B cell (primary cell): ENCODE measurements at regions of chr12 and their contacts with region 1.

Region 1: GRCh38 chr12:7068240-7068993 is 7.9 kb downstream of the C1S start:
- DNase-seq: no peak
- ATAC-seq: no peak
- H3K4me3 ChIP-seq: no peak overlapping the region
- H3K4me3 Mint-ChIP-seq: no peak overlapping the region
- H3K27ac ChIP-seq: no peak overlapping the region
- H3K27ac Mint-ChIP-seq: no peak overlapping the region
- H3K4me1 ChIP-seq: no peaks in the 10 kb centered on the region
- H3K4me1 Mint-ChIP-seq: no peaks in the 10 kb centered on the region
- H3K27me3 ChIP-seq: no peaks in the 10 kb centered on the region
- H3K27me3 Mint-ChIP-seq: peaks cover 30% of the 10 kb centered on the region
- CTCF ChIP-seq: no peak

Region 2: GRCh38 chr12:6592087-6592486 is 476.3 kb before region 1 on chr12:
- CTCF ChIA-PET with region 1: no interaction called
- POLR2A ChIA-PET with region 1: interaction called, 10 read pairs
- intact Hi-C with region 1: no loop called
- DNase-seq: no peak
- ATAC-seq: no peak
- H3K4me3 ChIP-seq: no peak overlapping the region
- H3K4me3 Mint-ChIP-seq: no peak overlapping the region
- H3K27ac ChIP-seq: no peak overlapping the region
- H3K27ac Mint-ChIP-seq: no peak overlapping the region
- H3K4me1 ChIP-seq: no peaks in the 10 kb centered on the region
- H3K4me1 Mint-ChIP-seq: peaks cover 8% of the 10 kb centered on the region
- H3K27me3 ChIP-seq: no peaks in the 10 kb centered on the region
- H3K27me3 Mint-ChIP-seq: no peaks in the 10 kb centered on the region
- CTCF ChIP-seq: no peak

Region 3: GRCh38 chr12:7387289-7387688 is 318.9 kb after region 1 on chr12:
- CTCF ChIA-PET with region 1: no interaction called
- POLR2A ChIA-PET with region 1: no interaction called
- intact Hi-C with region 1: no loop called
- DNase-seq: no peak
- ATAC-seq: no peak
- H3K4me3 ChIP-seq: no peak overlapping the region
- H3K4me3 Mint-ChIP-seq: no peak overlapping the region
- H3K27ac ChIP-seq: no peak overlapping the region
- H3K27ac Mint-ChIP-seq: no peak overlapping the region
- H3K4me1 ChIP-seq: no peaks in the 10 kb centered on the region
- H3K4me1 Mint-ChIP-seq: no peaks in the 10 kb centered on the region
- H3K27me3 ChIP-seq: peaks cover 0 to 4% (median 3%) of the 10 kb centered on the region in 4 experiments
- H3K27me3 Mint-ChIP-seq: peaks cover 9% of the 10 kb centered on the region
- CTCF ChIP-seq: no peak